ENCODE measurements at regions of chr4 and their contacts with region 1.

Region 1: GRCh38 chr4:37891260-37892159 is 626 bp downstream of the TBC1D1 start:
- DNase-seq: peak; percentile 54 to 72 (median 65)
- H3K4me3 ChIP-seq: peak overlapping the region; percentile 69 to 85
- H3K4me3 Mint-ChIP-seq: peak overlapping the region; percentile 93 to 99 (median 97)
- H3K27ac ChIP-seq: peak overlapping the region; percentile 61
- H3K27ac Mint-ChIP-seq: peak overlapping the region; percentile 90 to 98 (median 96)
- H3K4me1 ChIP-seq: peaks cover 33% of the 10 kb centered on the region
- H3K4me1 Mint-ChIP-seq: peaks cover 20 to 47% (median 40%) of the 10 kb centered on the region in 4 donors
- H3K27me3 ChIP-seq: no peaks in the 10 kb centered on the region
- H3K27me3 Mint-ChIP-seq: no peaks in the 10 kb centered on the region

Region 2: GRCh38 chr4:36385951-36386571 is 1505.4 kb before region 1 on chr4:
- CTCF ChIA-PET with region 1: no interaction called
- POLR2A ChIA-PET with region 1: no interaction called
- intact Hi-C with region 1: no loop called
- DNase-seq: peak; percentile 75 to 83 (median 79)
- H3K4me3 ChIP-seq: no peak overlapping the region
- H3K4me3 Mint-ChIP-seq: peak overlapping the region; percentile 18 to 85 (median 64)
- H3K27ac ChIP-seq: peak overlapping the region; percentile 39
- H3K27ac Mint-ChIP-seq: peak overlapping the region; percentile 78 to 99 (median 96)
- H3K4me1 ChIP-seq: peaks cover 23% of the 10 kb centered on the region
- H3K4me1 Mint-ChIP-seq: peaks cover 20 to 32% (median 23%) of the 10 kb centered on the region in 4 donors
- H3K27me3 ChIP-seq: no peaks in the 10 kb centered on the region
- H3K27me3 Mint-ChIP-seq: no peaks in the 10 kb centered on the region

Region 3: GRCh38 chr4:37826295-37827029 is 65.0 kb before region 1 on chr4 and contains the start of gene PGM2:
- CTCF ChIA-PET with region 1: interaction called, 4 read pairs
- POLR2A ChIA-PET with region 1: interaction called, 39 read pairs
- intact Hi-C with region 1: loop called (anchors 1 kb)
- DNase-seq: peak; percentile 86 to 90 (median 88)
- H3K4me3 ChIP-seq: peak within 1 kb of the TSS; percentile 97 to 98
- H3K4me3 Mint-ChIP-seq: peak within 1 kb of the TSS; percentile 93 to 99 (median 97)
- H3K27ac ChIP-seq: peak within 1 kb of the TSS; percentile 69
- H3K27ac Mint-ChIP-seq: peak within 1 kb of the TSS; percentile 66 to 99 (median 96)
- H3K4me1 ChIP-seq: peaks cover 23% of the 10 kb centered on the region
- H3K4me1 Mint-ChIP-seq: peaks cover 23 to 56% (median 37%) of the 10 kb centered on the region in 4 donors
- H3K27me3 ChIP-seq: no peaks in the 10 kb centered on the region
- H3K27me3 Mint-ChIP-seq: no peaks in the 10 kb centered on the region
- total RNA-seq, gene PGM2: 16.9 to 18.4 TPM

Region 4: GRCh38 chr4:37977471-37978247 is 86.1 kb after region 1 on chr4:
- CTCF ChIA-PET with region 1: interaction called, 4 read pairs
- POLR2A ChIA-PET with region 1: interaction called, 23 read pairs
- intact Hi-C with region 1: loop called (anchors 1 kb)
- DNase-seq: peak; percentile 74 to 78 (median 77)
- H3K4me3 ChIP-seq: peak overlapping the region; percentile 67 to 69
- H3K4me3 Mint-ChIP-seq: peak overlapping the region; percentile 86 to 92 (median 88)
- H3K27ac ChIP-seq: peak overlapping the region; percentile 75
- H3K27ac Mint-ChIP-seq: peak overlapping the region; percentile 84 to 91 (median 88)
- H3K4me1 ChIP-seq: peaks cover 22% of the 10 kb centered on the region
- H3K4me1 Mint-ChIP-seq: peaks cover 16 to 40% (median 24%) of the 10 kb centered on the region in 4 donors
- H3K27me3 ChIP-seq: no peaks in the 10 kb centered on the region
- H3K27me3 Mint-ChIP-seq: no peaks in the 10 kb centered on the region

Region 5: DNA sequence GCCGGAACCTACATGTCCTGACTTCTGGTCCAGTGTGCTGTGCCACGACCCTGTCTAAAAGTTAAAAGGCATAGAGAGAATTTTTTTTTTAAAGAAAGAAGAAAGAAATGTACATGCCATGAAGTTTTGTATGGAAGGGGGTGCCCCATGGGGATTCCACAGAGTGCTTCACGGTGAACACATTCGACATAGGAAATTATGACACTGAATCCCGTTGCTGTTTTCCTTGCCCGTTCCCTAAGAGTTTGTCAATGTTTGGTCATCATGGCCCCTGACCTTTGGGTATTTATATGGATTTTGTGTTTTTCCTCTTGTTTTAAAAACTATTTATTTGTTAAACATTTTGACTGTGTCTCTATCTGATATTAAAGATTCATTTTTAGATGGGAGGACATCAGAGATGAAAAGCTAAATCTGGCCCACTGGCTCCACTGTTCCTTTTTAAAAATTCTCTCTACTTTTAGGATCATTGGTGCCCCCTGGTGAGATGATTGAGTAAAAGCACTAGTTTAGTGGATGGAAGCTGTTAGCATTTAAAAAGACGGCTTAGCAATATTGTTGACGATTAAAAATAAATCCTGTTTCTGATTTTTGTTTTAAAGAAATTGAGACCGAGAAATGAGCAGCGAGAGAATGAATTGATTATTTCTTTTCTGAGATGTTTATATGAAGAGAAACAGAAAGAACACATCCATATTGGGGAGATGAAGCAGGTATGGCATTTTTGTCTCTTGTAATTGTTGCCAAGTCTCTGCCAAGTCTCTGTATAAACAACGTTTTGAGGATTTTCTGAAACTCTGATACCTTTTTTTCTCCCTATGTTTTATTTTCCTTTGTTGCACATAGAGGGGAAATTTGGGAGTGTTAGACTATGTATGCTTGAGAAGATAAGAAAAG is 143.7 kb after region 1 on chr4:
- CTCF ChIA-PET with region 1: interaction called, 5 read pairs
- POLR2A ChIA-PET with region 1: interaction called, 3 read pairs
- intact Hi-C with region 1: loop called (anchors 5 kb)
- DNase-seq: peak; percentile 46 to 60 (median 56)
- H3K4me3 ChIP-seq: no peak overlapping the region
- H3K4me3 Mint-ChIP-seq: no peak overlapping the region
- H3K27ac ChIP-seq: no peak overlapping the region
- H3K27ac Mint-ChIP-seq: peak overlapping the region in 1 of 7 donors; percentile 68
- H3K4me1 ChIP-seq: no peaks in the 10 kb centered on the region
- H3K4me1 Mint-ChIP-seq: peaks cover 0 to 3% (median 0%) of the 10 kb centered on the region in 4 donors
- H3K27me3 ChIP-seq: no peaks in the 10 kb centered on the region
- H3K27me3 Mint-ChIP-seq: no peaks in the 10 kb centered on the region

Region 6: GRCh38 chr4:38223782-38224236 is 332.3 kb after region 1 on chr4:
- CTCF ChIA-PET with region 1: no interaction called
- POLR2A ChIA-PET with region 1: no interaction called
- intact Hi-C with region 1: no loop called
- DNase-seq: no peak
- H3K4me3 ChIP-seq: no peak overlapping the region
- H3K4me3 Mint-ChIP-seq: no peak overlapping the region
- H3K27ac ChIP-seq: no peak overlapping the region
- H3K27ac Mint-ChIP-seq: no peak overlapping the region
- H3K4me1 ChIP-seq: no peaks in the 10 kb centered on the region
- H3K4me1 Mint-ChIP-seq: no peaks in the 10 kb centered on the region
- H3K27me3 ChIP-seq: no peaks in the 10 kb centered on the region
- H3K27me3 Mint-ChIP-seq: no peaks in the 10 kb centered on the region